ENCODE measurements at regions of chr5 and their contacts with region 1.

Region 1: DNA sequence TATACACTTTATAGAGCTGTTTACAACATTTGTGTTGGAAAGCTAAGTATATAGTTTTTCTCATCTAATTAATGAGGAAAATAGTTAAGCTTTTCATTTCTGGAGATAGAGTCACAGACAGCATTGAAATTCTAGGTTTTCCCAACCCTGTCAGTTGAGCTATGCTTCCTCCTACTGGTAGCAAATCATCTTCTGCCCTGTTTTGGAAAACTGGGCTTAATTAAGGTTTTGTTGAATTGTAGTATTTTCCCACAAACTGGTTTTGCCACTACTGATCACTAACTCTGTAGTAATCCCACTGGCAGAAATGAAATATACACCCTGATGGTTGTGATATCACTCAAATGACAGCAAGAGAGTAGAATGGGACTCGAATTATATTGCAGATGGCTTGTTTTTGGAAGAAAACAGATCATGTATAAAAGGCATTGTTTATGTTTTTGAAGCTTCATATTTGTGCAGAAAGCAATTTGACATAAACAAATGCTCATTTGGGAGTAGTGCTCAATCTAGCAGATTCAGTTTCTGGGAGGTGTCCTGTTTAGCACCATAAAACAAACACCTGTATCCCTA is 46.6 kb downstream of the CD180 start:
- DNase-seq: no peak
- H3K4me3 ChIP-seq: no peak overlapping the region
- CTCF ChIP-seq: peak; percentile 49

Region 2: DNA sequence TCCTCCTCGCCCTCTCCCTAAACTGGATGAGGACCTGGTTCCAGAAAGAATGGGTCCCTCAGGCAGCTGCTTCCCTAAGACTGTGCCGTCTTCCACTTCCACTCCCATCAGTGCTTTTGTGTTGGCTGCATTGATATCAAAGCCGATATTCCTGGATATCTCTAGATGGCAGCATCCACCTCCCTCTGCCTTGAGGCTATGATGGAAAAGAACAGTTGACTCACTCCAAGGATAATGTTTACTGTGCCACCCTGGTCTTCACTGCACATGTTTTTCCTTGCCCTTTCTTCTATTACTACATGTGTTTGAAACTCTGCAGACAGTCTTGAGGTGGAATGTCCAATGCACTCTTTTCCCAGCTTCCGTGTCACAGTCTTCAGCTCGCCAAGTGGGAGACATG is 342.3 kb before region 1 on chr5:
- CTCF ChIA-PET with region 1: interaction called, 58 read pairs
- POLR2A ChIA-PET with region 1: no interaction called
- DNase-seq: no peak
- H3K4me3 ChIP-seq: no peak overlapping the region
- CTCF ChIP-seq: peak; percentile 66

Region 3: GRCh38 chr5:66958980-66959641 is 190.9 kb before region 1 on chr5:
- CTCF ChIA-PET with region 1: interaction called, 10 read pairs
- POLR2A ChIA-PET with region 1: no interaction called
- DNase-seq: peak; percentile 46
- H3K4me3 ChIP-seq: peak overlapping the region; percentile 66
- CTCF ChIP-seq: no peak

Region 4: DNA sequence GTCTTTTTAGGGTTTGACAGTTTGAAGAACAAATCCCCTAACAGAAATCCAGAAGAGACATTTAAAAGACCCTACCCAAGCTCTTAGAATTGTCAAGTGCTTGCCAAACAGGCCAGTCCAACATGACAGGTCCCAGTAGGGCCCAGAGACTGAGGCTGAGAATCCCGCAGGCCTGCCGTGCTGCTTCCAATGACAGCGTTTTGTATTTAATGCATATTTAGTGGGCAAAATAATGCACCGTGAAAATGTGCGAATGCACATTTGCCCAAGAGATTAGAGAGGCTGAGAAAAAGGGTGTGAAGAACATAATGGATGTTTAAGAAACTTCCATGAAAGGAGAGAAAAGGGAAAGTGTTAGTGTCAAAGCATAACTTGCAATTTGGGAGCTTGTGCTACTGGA is 11.0 kb before region 1 on chr5:
- CTCF ChIA-PET with region 1: interaction called, 10 read pairs
- POLR2A ChIA-PET with region 1: no interaction called
- DNase-seq: no peak
- H3K4me3 ChIP-seq: no peak overlapping the region
- CTCF ChIP-seq: no peak